A549 (cell line): ENCODE measurements at regions of chr9 and their contacts with region 1.

Region 1: DNA sequence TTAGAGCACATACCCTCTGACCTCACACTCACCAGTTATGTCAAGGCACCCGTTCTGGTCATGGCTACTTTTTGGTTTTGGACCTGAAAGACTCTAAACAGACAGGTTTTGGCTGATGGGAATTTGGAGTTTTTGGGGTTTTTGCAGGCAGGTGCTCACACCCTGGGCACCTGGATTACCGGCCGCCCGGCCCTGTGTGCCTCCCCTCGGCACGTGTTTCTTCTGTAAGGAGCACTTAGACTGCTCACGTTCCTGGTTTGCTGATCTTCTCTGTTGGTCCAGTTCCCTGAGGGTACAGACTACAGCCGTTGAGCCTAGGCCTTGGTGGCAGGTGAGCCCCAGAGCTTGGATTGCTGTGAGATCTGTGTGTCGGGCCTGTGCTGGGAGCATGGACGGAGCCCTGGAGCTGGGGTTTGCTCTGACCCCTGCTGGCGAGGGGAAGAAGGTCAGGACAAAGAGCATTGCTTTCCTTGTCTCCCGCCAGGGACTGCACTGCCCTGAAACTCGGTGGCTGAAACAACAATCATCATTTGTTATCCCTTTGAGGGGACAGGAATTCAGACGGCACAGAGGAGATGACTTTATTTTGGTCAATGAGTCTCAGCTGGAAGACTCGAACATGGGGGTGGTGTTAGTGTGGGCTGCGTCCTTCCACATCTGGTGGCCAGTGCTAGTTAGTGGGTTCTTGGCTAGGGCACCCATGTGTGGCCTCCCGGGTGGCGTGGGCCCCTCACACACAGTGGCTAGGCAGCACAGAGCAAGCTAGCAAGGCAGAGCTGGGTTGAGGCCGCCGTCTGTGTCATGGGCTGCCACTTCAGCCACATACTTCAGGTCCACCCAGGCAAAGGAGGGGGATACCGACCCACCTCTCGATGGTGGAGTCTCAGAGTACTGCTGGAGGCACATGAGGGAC is 76.4 kb downstream of the EHMT1 start:
- DNase-seq: peak; percentile 54 to 61
- ATAC-seq: peak; percentile 92 to 97
- H3K4me3 ChIP-seq: no peak overlapping the region
- H3K27ac ChIP-seq: peak overlapping the region in 1 of 2 experiments; percentile 32; a peak in 2 of 6 replicates
- H3K4me1 ChIP-seq: peaks cover 15% of the 10 kb centered on the region
- CTCF ChIP-seq: peak; percentile 56
- EP300 ChIP-seq: no peak
- POLR2A ChIP-seq: no peak
- RAD21 ChIP-seq: peak; percentile 36 to 55; a peak in 4 of 5 replicates

Region 2: DNA sequence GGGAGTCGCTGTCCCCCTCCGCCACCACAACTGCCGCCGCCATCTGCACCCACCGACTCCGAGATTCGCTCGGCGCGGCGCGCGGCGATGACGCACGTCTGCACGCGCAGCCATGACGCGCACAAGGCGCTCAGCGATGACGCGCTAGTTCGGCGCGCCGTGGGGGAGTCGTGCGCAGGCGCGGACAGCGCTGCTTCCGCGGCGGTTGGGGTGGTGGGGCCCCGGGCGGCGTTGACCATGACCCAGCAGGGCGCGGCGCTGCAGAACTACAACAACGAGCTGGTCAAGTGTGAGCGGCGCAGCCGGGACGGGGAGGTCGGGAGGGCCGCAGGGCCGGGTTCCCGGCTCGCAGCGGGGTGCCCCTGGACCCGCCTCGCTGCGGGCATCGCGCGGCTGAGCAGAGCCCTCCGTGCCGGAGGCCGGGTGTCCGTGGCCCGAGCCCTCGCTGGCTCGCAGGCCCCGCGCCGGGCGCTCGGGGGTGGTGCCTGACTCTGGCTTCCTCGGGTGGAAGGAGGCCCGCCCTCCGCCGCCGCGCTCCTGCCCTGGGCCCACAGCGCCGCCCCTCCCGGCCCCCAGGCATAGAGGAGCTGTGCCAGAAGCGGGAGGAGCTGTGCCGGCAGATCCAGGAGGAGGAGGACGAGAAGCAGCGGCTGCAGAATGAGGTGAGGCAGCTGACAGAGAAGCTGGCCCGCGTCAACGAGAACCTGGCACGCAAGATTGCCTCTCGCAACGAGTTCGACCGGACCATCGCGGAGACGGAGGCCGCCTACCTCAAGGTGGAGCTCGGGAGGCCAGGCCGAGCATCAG is 506.5 kb before region 1 on chr9 and contains the starts of genes ANAPC2 and SSNA1:
- CTCF ChIA-PET with region 1: no interaction called
- POLR2A ChIA-PET with region 1: no interaction called
- DNase-seq: peak; percentile 69 to 96
- ATAC-seq: peak; percentile 66 to 82
- H3K4me3 ChIP-seq: peak within 1 kb of the TSS; percentile 92
- H3K27ac ChIP-seq: peak within 1 kb of the TSS; percentile 97
- H3K4me1 ChIP-seq: peaks cover 23% of the 10 kb centered on the region
- CTCF ChIP-seq: peak; percentile 39
- EP300 ChIP-seq: no peak
- POLR2A ChIP-seq: peak; percentile 65
- RAD21 ChIP-seq: peak; percentile 31 to 49; a peak in 3 of 5 replicates
- polyA plus RNA-seq, gene ANAPC2: 17.5 and 22.3 TPM in 2 replicates
- polyA plus RNA-seq, gene SSNA1: 52.6 and 54.1 TPM in 2 replicates

Region 3: GRCh38 chr9:137705443-137706293 is 10.4 kb after region 1 on chr9:
- CTCF ChIA-PET with region 1: interaction called, 18 read pairs
- POLR2A ChIA-PET with region 1: no interaction called
- DNase-seq: no peak
- ATAC-seq: peak; percentile 34 to 46; a peak in 3 of 6 replicates
- H3K4me3 ChIP-seq: no peak overlapping the region
- H3K27ac ChIP-seq: peak overlapping the region in 1 of 2 experiments; percentile 39; a peak in 1 of 6 replicates
- H3K4me1 ChIP-seq: no peaks in the 10 kb centered on the region
- CTCF ChIP-seq: no peak
- EP300 ChIP-seq: no peak
- POLR2A ChIP-seq: no peak
- RAD21 ChIP-seq: no peak

Region 4: DNA sequence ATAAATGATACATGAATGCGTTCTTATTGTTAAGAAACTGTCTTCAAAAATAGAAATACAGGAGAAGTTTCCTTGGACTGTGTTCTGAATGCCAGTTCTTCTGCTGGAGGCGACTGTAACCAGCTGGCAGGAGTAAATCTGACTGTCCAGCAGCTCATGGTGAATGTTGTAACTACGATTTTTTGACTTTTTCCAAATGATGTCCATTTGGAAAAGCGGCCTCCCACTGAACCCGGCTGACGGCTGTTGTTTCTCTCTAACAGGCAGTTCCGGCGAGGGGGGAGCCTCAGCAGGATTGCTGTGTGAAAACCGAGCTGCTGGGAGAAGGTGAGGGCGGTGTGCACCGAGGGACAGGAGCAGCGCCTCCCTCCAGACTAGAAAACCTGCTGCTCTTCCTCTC is 15.5 kb after region 1 on chr9:
- CTCF ChIA-PET with region 1: interaction called, 18 read pairs
- POLR2A ChIA-PET with region 1: no interaction called
- DNase-seq: no peak
- ATAC-seq: no peak
- H3K4me3 ChIP-seq: no peak overlapping the region
- H3K27ac ChIP-seq: no peak overlapping the region
- H3K4me1 ChIP-seq: no peaks in the 10 kb centered on the region
- CTCF ChIP-seq: no peak
- EP300 ChIP-seq: no peak
- POLR2A ChIP-seq: no peak
- RAD21 ChIP-seq: no peak